ENCODE measurements at regions of chr3 and their contacts with region 1.

Region 1: GRCh38 chr3:4633078-4634004 is 140.2 kb downstream of the ITPR1 start:
- DNase-seq: peak in 2 of 9 experiments; percentile 63 to 71
- ATAC-seq: peak; percentile 63
- H3K4me3 ChIP-seq: no peak overlapping the region
- H3K4me3 Mint-ChIP-seq: no peak overlapping the region
- H3K27ac ChIP-seq: no peak overlapping the region
- H3K27ac Mint-ChIP-seq: no peak overlapping the region
- H3K4me1 ChIP-seq: no peaks in the 10 kb centered on the region
- H3K4me1 Mint-ChIP-seq: peaks cover 2% of the 10 kb centered on the region
- H3K27me3 ChIP-seq: no peaks in the 10 kb centered on the region
- H3K27me3 Mint-ChIP-seq: no peaks in the 10 kb centered on the region
- CTCF ChIP-seq: peak; percentile 78

Region 2: DNA sequence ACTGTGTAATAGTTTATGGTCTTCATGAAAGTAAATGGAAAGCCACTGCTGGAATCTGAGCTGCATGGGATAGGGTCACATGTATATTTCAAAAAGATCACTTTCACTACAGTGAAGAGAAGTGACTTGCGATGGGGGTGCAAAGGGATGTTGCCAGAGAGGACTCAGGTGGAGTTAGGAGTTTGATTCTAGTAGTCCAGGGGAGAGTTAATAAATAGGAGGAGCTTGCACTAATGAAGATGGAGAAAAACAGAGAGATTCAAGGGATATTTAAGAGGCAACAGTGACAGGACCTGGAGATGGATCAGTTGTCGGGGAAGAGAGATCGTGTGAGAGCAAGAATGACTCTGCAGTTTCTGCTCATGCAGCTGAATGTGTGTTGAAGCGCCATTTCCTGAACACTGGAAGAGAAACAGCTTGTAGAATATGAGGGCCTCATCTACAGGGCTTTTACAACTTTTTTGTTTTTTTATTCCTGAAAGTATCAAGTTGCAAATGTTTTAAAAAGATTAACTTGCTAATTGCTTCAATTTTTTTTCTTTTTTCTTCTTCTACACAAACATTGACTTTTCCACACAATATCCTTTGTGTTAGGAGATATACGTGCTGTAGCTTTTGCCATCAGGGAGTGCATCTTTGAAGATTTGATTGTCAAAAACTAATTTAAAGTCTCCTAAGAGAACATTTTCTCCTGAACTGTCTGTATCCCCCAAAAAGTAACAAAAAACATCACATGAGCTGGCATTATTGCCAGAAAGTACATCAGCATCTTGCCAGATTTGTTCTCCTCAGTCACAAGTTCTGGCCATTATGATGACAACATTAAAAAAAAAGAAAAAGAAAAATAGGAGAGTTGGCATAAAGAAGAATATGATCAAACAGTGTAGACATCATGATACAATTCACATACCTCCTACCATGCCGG is 292.7 kb before region 1 on chr3:
- CTCF ChIA-PET with region 1: interaction called, 11 read pairs
- POLR2A ChIA-PET with region 1: no interaction called
- intact Hi-C with region 1: no loop called
- DNase-seq: no peak
- ATAC-seq: no peak
- H3K4me3 ChIP-seq: no peak overlapping the region
- H3K4me3 Mint-ChIP-seq: no peak overlapping the region
- H3K27ac ChIP-seq: no peak overlapping the region
- H3K27ac Mint-ChIP-seq: no peak overlapping the region
- H3K4me1 ChIP-seq: no peaks in the 10 kb centered on the region
- H3K4me1 Mint-ChIP-seq: no peaks in the 10 kb centered on the region
- H3K27me3 ChIP-seq: no peaks in the 10 kb centered on the region
- H3K27me3 Mint-ChIP-seq: no peaks in the 10 kb centered on the region
- CTCF ChIP-seq: no peak

Region 3: GRCh38 chr3:4426601-4427344 is 206.6 kb before region 1 on chr3:
- CTCF ChIA-PET with region 1: no interaction called
- POLR2A ChIA-PET with region 1: no interaction called
- intact Hi-C with region 1: loop called in 1 of 2 experiments (anchors 10 kb)
- DNase-seq: no peak
- ATAC-seq: no peak
- H3K4me3 ChIP-seq: no peak overlapping the region
- H3K4me3 Mint-ChIP-seq: no peak overlapping the region
- H3K27ac ChIP-seq: no peak overlapping the region
- H3K27ac Mint-ChIP-seq: no peak overlapping the region
- H3K4me1 ChIP-seq: no peaks in the 10 kb centered on the region
- H3K4me1 Mint-ChIP-seq: peaks cover 5% of the 10 kb centered on the region
- H3K27me3 ChIP-seq: no peaks in the 10 kb centered on the region
- H3K27me3 Mint-ChIP-seq: no peaks in the 10 kb centered on the region
- CTCF ChIP-seq: no peak

Region 4: DNA sequence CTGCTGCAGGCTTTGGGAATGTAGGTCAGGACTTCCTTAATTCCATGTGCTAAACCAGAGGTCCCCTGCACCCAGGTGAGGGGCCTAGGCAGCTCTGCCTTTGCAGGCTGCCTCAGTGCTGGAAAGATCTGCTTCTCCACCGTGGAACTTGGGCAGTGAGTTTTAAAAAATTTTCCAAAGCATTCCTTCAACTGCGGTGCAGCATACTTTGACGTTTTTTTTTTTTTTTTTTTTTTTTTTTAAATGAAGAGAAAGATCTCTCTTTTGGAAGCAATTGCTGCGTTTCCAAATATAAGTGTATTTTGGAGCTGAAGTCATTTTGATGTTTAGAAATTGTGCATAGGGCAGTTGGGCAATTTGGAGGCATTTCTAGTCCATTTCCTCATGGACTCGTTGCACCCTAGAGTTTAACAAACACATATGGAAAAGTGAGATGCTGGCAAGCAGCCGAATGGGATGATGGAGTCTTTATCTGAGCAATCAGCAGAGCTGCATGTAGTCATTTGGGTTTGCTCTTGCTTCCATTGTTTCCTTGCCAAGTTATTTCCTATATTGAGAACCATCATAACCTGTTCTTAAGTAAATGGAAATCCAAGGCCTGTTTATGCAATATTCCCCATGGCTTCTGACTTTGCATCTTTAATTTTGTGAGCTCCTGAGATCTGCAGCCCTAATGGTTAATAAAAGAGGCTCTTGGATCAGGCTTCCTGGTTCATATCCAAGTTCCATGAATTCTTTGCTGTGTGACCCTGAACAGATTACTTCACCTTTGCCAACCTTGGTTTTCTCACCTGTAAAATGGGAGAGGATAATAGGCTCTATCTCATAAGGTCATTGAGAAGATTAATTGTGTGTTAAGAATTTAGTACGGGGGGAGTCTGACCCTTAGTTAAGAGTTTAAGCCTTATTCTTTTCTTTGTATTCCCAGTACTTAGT is 109.0 kb before region 1 on chr3:
- CTCF ChIA-PET with region 1: interaction called, 35 read pairs
- POLR2A ChIA-PET with region 1: no interaction called
- intact Hi-C with region 1: loop called (anchors 1 kb)
- DNase-seq: no peak
- ATAC-seq: no peak
- H3K4me3 ChIP-seq: no peak overlapping the region
- H3K4me3 Mint-ChIP-seq: no peak overlapping the region
- H3K27ac ChIP-seq: no peak overlapping the region
- H3K27ac Mint-ChIP-seq: no peak overlapping the region
- H3K4me1 ChIP-seq: peaks cover 5% of the 10 kb centered on the region
- H3K4me1 Mint-ChIP-seq: peaks cover 35% of the 10 kb centered on the region
- H3K27me3 ChIP-seq: no peaks in the 10 kb centered on the region
- H3K27me3 Mint-ChIP-seq: no peaks in the 10 kb centered on the region
- CTCF ChIP-seq: no peak

Region 5: GRCh38 chr3:5426094-5426883 is 792.9 kb after region 1 on chr3:
- CTCF ChIA-PET with region 1: no interaction called
- POLR2A ChIA-PET with region 1: no interaction called
- intact Hi-C with region 1: no loop called
- DNase-seq: peak; percentile 4 to 65 (median 48)
- ATAC-seq: no peak
- H3K4me3 ChIP-seq: no peak overlapping the region
- H3K4me3 Mint-ChIP-seq: no peak overlapping the region
- H3K27ac ChIP-seq: no peak overlapping the region
- H3K27ac Mint-ChIP-seq: no peak overlapping the region
- H3K4me1 ChIP-seq: no peaks in the 10 kb centered on the region
- H3K4me1 Mint-ChIP-seq: peaks cover 5% of the 10 kb centered on the region
- H3K27me3 ChIP-seq: no peaks in the 10 kb centered on the region
- H3K27me3 Mint-ChIP-seq: peaks cover 3% of the 10 kb centered on the region
- CTCF ChIP-seq: peak; percentile 53